PC-9 (cell line): ENCODE measurements at regions of chr7 and their contacts with region 1.

Region 1: GRCh38 chr7:101602484-101603241 is 26.4 kb downstream of the MYL10 start:
- DNase-seq: peak; percentile 47 to 83
- H3K4me3 ChIP-seq: no peak overlapping the region
- H3K27ac ChIP-seq: no peak overlapping the region
- H3K4me1 ChIP-seq: no peaks in the 10 kb centered on the region; the same call in 1 of the 2 replicates
- H3K27me3 ChIP-seq: no peaks in the 10 kb centered on the region
- CTCF ChIP-seq: peak; percentile 93

Region 2: GRCh38 chr7:101565601-101566209 is 37.0 kb before region 1 on chr7:
- CTCF ChIA-PET with region 1: interaction called, 10 read pairs
- POLR2A ChIA-PET with region 1: interaction called, 7 read pairs
- intact Hi-C with region 1: no loop called
- DNase-seq: no peak
- H3K4me3 ChIP-seq: no peak overlapping the region
- H3K27ac ChIP-seq: no peak overlapping the region
- H3K4me1 ChIP-seq: no peaks in the 10 kb centered on the region
- H3K27me3 ChIP-seq: peaks cover 19% of the 10 kb centered on the region
- CTCF ChIP-seq: no peak

Region 3: DNA sequence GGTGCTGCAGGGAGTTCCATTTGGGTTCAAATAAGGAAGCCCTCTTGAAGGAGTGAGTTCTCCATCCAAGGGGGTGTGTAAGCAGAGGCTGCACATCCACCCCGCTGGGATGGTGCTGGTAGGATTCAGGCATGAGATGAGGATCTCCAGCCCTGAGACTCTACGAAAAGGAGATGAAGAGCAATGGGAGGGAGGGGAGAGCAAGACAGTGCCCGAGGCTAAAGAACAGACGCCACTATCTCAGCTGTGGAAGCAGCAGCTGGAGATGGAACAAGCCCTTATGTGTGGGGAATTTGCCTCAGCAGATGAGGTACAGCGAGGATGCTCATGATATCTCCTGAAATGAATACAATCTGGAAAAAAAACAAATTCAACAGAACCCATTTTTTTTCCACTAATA is 54.5 kb after region 1 on chr7:
- CTCF ChIA-PET with region 1: no interaction called
- POLR2A ChIA-PET with region 1: no interaction called
- intact Hi-C with region 1: no loop called
- DNase-seq: no peak
- H3K4me3 ChIP-seq: no peak overlapping the region
- H3K27ac ChIP-seq: no peak overlapping the region
- H3K4me1 ChIP-seq: no peaks in the 10 kb centered on the region
- H3K27me3 ChIP-seq: peaks cover 17% of the 10 kb centered on the region; the same call in 1 of the 2 replicates
- CTCF ChIP-seq: no peak

Region 4: DNA sequence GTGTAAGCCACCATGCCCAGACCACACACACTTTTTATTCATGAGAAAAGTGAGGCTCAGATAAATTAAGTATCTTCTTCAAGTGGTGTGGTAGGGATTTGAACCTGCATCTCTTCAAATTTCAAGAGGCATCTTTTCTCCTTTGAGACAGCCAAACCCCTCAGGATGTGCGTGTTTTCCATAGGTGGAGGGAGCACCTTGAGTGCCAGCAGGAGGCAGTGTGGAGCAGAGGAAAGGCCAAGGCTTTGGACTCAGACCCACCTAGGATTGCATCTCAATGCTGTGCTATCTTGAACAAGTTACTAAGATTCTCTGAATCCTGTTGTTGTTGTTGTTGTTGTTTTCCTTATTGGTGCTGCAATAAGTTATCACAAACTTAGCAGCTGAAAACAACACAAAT is 66.6 kb after region 1 on chr7:
- CTCF ChIA-PET with region 1: interaction called, 10 read pairs
- POLR2A ChIA-PET with region 1: no interaction called
- intact Hi-C with region 1: no loop called
- DNase-seq: no peak
- H3K4me3 ChIP-seq: no peak overlapping the region
- H3K27ac ChIP-seq: no peak overlapping the region
- H3K4me1 ChIP-seq: peaks cover 3% of the 10 kb centered on the region; the same call in 1 of the 2 replicates
- H3K27me3 ChIP-seq: no peaks in the 10 kb centered on the region
- CTCF ChIP-seq: peak; percentile 27; the same call in 1 of the 2 replicates

Region 5: GRCh38 chr7:101681170-101682007 is 78.7 kb after region 1 on chr7:
- CTCF ChIA-PET with region 1: interaction called, 6 read pairs
- POLR2A ChIA-PET with region 1: no interaction called
- intact Hi-C with region 1: loop called (anchors 2 kb)
- DNase-seq: peak; percentile 62 to 84
- H3K4me3 ChIP-seq: no peak overlapping the region
- H3K27ac ChIP-seq: no peak overlapping the region
- H3K4me1 ChIP-seq: peaks cover 13% of the 10 kb centered on the region
- H3K27me3 ChIP-seq: no peaks in the 10 kb centered on the region
- CTCF ChIP-seq: no peak

Region 6: GRCh38 chr7:101688183-101688831 is 85.6 kb after region 1 on chr7:
- CTCF ChIA-PET with region 1: interaction called, 12 read pairs
- POLR2A ChIA-PET with region 1: no interaction called
- intact Hi-C with region 1: loop called (anchors 1 kb)
- DNase-seq: peak in 1 of 2 experiments; percentile 79
- H3K4me3 ChIP-seq: peak overlapping the region; percentile 38; the same call in 1 of the 2 replicates
- H3K27ac ChIP-seq: no peak overlapping the region
- H3K4me1 ChIP-seq: peaks cover 4% of the 10 kb centered on the region
- H3K27me3 ChIP-seq: no peaks in the 10 kb centered on the region
- CTCF ChIP-seq: peak; percentile 96

Region 7: GRCh38 chr7:101848208-101848951 is 245.7 kb after region 1 on chr7:
- CTCF ChIA-PET with region 1: interaction called, 12 read pairs
- POLR2A ChIA-PET with region 1: no interaction called
- intact Hi-C with region 1: no loop called
- DNase-seq: no peak
- H3K4me3 ChIP-seq: no peak overlapping the region
- H3K27ac ChIP-seq: no peak overlapping the region
- H3K4me1 ChIP-seq: no peaks in the 10 kb centered on the region
- H3K27me3 ChIP-seq: no peaks in the 10 kb centered on the region
- CTCF ChIP-seq: no peak

Region 8: GRCh38 chr7:102236592-102237287 is 634.1 kb after region 1 on chr7:
- CTCF ChIA-PET with region 1: interaction called, 8 read pairs
- POLR2A ChIA-PET with region 1: no interaction called
- intact Hi-C with region 1: loop called (anchors 1 kb)
- DNase-seq: peak in 1 of 2 experiments; percentile 71
- H3K4me3 ChIP-seq: no peak overlapping the region
- H3K27ac ChIP-seq: no peak overlapping the region
- H3K4me1 ChIP-seq: no peaks in the 10 kb centered on the region
- H3K27me3 ChIP-seq: no peaks in the 10 kb centered on the region
- CTCF ChIP-seq: peak; percentile 90